ENCODE measurements at regions of chr5 and their contacts with region 1.

Region 1: GRCh38 chr5:115069087-115069968 is 100.4 kb downstream of the TRIM36 start:
- DNase-seq: peak in 1 of 2 experiments; percentile 58
- H3K4me3 ChIP-seq: no peak overlapping the region
- H3K27ac ChIP-seq: no peak overlapping the region
- H3K4me1 ChIP-seq: peaks cover 0 to 12% (median 3%) of the 10 kb centered on the region in 4 experiments; a peak in 4 of 7 replicates
- H3K27me3 ChIP-seq: no peaks in the 10 kb centered on the region
- CTCF ChIP-seq: peak; percentile 9 to 86 (median 83)
- EP300 ChIP-seq: no peak
- POLR2A ChIP-seq: no peak
- RAD21 ChIP-seq: peak; percentile 95 to 96

Region 2: DNA sequence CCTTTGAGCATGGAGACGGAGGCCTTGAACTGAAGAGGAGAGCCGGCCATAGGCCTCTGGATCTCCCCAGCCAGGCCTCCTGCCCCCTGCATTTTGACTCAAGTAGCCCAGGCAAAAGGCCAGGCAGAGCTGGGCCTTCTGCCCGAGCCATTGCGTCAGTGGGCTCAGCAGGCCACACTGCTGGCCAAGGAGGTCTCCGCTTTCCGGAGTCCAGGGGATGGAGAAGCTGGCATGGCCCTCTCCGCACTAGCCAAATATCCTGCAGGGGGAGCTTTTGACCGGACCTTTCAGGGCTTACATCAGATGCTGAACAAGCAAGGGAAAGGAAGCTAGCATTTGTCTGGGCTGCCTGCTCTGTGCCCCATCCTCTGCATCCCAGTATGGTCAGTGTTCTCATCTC is 286.5 kb before region 1 on chr5:
- CTCF ChIA-PET with region 1: interaction called, 11 read pairs
- POLR2A ChIA-PET with region 1: no interaction called
- DNase-seq: peak in 1 of 2 experiments; percentile 56
- H3K4me3 ChIP-seq: no peak overlapping the region
- H3K27ac ChIP-seq: no peak overlapping the region
- H3K4me1 ChIP-seq: no peaks in the 10 kb centered on the region
- H3K27me3 ChIP-seq: no peaks in the 10 kb centered on the region
- CTCF ChIP-seq: peak; percentile 39 to 51 (median 49)
- EP300 ChIP-seq: no peak
- POLR2A ChIP-seq: no peak
- RAD21 ChIP-seq: peak; percentile 42 to 60

Region 3: DNA sequence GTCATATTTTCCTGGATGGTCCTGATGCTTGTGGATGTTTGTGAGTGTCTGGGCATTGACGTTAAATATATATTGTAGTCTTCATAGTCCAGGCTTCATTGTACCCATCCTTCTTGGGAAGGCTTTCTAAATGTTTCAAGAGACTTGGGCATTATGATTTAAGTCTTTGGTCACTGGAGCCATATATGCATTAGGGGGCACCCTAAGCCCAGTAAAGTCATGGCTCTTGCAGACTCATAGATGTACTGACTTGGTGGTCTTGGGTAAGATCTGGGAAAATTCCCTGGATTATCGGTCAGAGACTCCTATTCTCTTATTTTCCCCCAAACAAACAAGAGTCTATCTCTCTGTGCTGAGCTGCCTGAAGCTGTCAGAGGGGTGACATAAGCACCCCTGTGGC is 170.7 kb before region 1 on chr5:
- CTCF ChIA-PET with region 1: interaction called, 40 read pairs
- POLR2A ChIA-PET with region 1: no interaction called
- DNase-seq: no peak
- H3K4me3 ChIP-seq: no peak overlapping the region
- H3K27ac ChIP-seq: no peak overlapping the region
- H3K4me1 ChIP-seq: no peaks in the 10 kb centered on the region
- H3K27me3 ChIP-seq: no peaks in the 10 kb centered on the region
- CTCF ChIP-seq: peak in 2 of 3 experiments; percentile 47 to 51; a peak in 3 of 4 replicates
- EP300 ChIP-seq: no peak
- POLR2A ChIP-seq: no peak
- RAD21 ChIP-seq: peak; percentile 82 to 83

Region 4: DNA sequence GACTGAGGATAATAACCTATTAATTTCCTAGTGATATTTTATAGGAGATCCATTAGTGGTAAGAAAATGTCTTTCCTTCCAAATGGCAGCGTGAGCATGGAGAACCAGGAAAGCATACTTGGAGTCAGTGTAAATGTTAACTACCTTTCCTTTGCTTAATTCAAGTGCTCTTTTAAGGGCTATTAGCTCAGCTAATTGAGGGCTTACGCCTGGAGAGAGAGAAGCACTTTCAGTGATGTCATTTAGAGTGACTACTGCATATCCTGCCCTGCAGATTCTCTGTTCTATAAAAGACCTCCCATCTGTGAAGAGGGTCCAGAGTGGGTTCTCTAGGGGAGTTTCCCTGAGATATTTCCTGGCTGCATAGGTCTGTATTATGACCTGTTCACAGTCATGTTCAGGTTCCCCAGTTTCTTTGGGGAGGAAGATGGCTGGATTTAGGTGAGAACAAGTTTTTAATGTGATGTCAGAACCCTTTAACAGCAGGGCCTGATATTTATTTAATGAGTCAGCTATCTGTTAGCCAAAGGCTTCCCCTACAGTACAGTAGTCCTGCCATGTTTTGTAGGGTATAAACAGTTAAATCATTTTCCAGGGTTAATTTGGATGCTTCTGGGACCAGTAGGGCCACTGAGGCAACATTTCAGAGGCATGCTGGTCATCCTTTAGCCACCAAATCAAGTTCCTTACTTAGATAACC is 10.7 kb after region 1 on chr5:
- CTCF ChIA-PET with region 1: interaction called, 17 read pairs
- POLR2A ChIA-PET with region 1: no interaction called
- DNase-seq: no peak
- H3K4me3 ChIP-seq: no peak overlapping the region
- H3K27ac ChIP-seq: no peak overlapping the region
- H3K4me1 ChIP-seq: no peaks in the 10 kb centered on the region
- H3K27me3 ChIP-seq: no peaks in the 10 kb centered on the region
- CTCF ChIP-seq: no peak
- EP300 ChIP-seq: no peak
- POLR2A ChIP-seq: no peak
- RAD21 ChIP-seq: no peak

Region 5: GRCh38 chr5:115098041-115098702 is 28.8 kb after region 1 on chr5:
- CTCF ChIA-PET with region 1: interaction called, 11 read pairs
- POLR2A ChIA-PET with region 1: no interaction called
- DNase-seq: no peak
- H3K4me3 ChIP-seq: no peak overlapping the region
- H3K27ac ChIP-seq: no peak overlapping the region
- H3K4me1 ChIP-seq: peaks cover 0 to 2% (median 1%) of the 10 kb centered on the region in 4 experiments; a peak in 2 of 7 replicates
- H3K27me3 ChIP-seq: no peaks in the 10 kb centered on the region
- CTCF ChIP-seq: peak in 2 of 3 experiments; percentile 53 to 78; a peak in 3 of 4 replicates
- EP300 ChIP-seq: no peak
- POLR2A ChIP-seq: no peak
- RAD21 ChIP-seq: peak; percentile 83 to 84